ENCODE measurements at regions of chr6 and their contacts with region 1.

Region 1: DNA sequence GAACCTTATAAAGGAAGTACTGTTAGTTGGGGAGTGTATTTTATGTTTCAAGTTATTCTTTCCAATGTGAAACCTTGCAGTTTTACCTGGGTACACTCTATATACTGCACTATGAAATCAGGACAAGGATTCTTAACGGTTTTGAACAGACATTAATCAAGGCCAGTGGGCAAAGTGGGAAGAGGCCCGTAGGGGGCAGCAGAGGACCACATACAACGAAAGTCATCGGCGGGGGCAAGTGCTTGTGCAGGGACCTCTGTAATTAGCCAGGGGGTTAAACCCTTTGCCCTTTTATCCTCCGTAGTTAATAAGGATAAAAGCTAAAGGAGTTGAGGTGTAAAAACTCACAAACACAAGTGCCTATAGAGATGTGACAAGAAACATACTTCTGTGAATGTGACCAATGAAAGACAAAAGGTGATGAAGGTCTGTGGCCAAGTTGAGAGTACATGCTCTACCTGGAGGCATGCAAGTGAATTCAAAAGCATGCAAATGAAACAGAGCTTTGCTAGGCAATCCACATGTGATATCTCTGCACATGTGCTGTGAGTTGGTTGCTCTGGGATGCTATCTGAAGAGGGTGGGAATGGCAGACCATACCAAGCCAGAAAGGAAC is 392.7 kb upstream of the MAN1A1 start:
- DNase-seq: peak; percentile 72
- H3K4me3 Mint-ChIP-seq: no peak overlapping the region
- H3K27ac Mint-ChIP-seq: no peak overlapping the region
- H3K4me1 Mint-ChIP-seq: no peaks in the 10 kb centered on the region
- H3K27me3 Mint-ChIP-seq: no peaks in the 10 kb centered on the region

Region 2: GRCh38 chr6:119978274-119978889 is 236.1 kb after region 1 on chr6:
- CTCF ChIA-PET with region 1: no interaction called
- intact Hi-C with region 1: loop called (anchors 2 kb)
- DNase-seq: peak; percentile 16
- H3K4me3 Mint-ChIP-seq: no peak overlapping the region
- H3K27ac Mint-ChIP-seq: no peak overlapping the region
- H3K4me1 Mint-ChIP-seq: no peaks in the 10 kb centered on the region
- H3K27me3 Mint-ChIP-seq: no peaks in the 10 kb centered on the region

Region 3: DNA sequence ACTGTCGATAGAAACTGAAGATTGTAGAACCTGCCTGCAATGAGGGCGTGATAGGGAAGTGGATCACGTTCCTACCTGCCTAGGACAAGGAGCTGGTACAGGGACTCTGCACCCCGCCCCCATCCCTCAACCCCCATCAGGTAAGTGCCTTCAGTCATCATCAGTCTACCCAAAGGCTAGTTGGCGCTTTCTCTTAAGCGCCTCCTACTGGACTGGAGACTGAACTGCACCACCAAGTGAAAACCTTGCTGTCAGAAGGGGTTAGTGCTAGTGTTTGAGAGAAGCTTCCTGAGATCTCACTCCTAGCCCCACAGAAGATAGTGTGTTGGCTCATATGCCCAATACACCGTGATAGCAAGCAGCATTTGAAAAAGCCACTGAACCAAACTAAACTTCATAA is 313.8 kb after region 1 on chr6:
- CTCF ChIA-PET with region 1: no interaction called
- intact Hi-C with region 1: loop called (anchors 5 kb)
- DNase-seq: peak; percentile 13
- H3K4me3 Mint-ChIP-seq: no peak overlapping the region
- H3K27ac Mint-ChIP-seq: no peak overlapping the region
- H3K4me1 Mint-ChIP-seq: no peaks in the 10 kb centered on the region
- H3K27me3 Mint-ChIP-seq: peaks cover 2% of the 10 kb centered on the region

Region 4: GRCh38 chr6:120378582-120379220 is 636.4 kb after region 1 on chr6:
- CTCF ChIA-PET with region 1: no interaction called
- intact Hi-C with region 1: loop called (anchors 10 kb)
- DNase-seq: no peak
- H3K4me3 Mint-ChIP-seq: no peak overlapping the region
- H3K27ac Mint-ChIP-seq: no peak overlapping the region
- H3K4me1 Mint-ChIP-seq: no peaks in the 10 kb centered on the region
- H3K27me3 Mint-ChIP-seq: no peaks in the 10 kb centered on the region

Region 5: DNA sequence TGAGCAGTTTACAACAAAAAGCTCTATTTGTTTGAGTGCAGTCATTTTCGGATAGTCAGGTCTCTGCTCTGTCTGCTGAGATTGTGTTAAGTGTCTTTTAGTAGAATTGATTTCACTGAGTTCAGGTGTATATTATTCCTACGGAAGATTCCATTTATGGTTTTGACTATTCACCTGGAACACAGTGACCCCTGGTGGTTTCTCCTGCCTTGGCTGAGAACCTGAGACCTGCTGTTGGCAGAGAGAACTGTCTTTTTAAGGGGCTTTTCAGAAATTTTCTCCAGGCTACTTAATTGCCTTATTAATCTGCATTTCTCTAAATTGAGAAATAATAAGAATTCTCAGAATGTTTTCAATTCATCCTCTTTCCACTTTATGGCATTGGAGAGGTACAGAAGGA is 1084.0 kb after region 1 on chr6:
- CTCF ChIA-PET with region 1: no interaction called
- intact Hi-C with region 1: loop called (anchors 2 kb)
- DNase-seq: peak; percentile 24
- H3K4me3 Mint-ChIP-seq: no peak overlapping the region
- H3K27ac Mint-ChIP-seq: no peak overlapping the region
- H3K4me1 Mint-ChIP-seq: no peaks in the 10 kb centered on the region
- H3K27me3 Mint-ChIP-seq: no peaks in the 10 kb centered on the region

Region 6: DNA sequence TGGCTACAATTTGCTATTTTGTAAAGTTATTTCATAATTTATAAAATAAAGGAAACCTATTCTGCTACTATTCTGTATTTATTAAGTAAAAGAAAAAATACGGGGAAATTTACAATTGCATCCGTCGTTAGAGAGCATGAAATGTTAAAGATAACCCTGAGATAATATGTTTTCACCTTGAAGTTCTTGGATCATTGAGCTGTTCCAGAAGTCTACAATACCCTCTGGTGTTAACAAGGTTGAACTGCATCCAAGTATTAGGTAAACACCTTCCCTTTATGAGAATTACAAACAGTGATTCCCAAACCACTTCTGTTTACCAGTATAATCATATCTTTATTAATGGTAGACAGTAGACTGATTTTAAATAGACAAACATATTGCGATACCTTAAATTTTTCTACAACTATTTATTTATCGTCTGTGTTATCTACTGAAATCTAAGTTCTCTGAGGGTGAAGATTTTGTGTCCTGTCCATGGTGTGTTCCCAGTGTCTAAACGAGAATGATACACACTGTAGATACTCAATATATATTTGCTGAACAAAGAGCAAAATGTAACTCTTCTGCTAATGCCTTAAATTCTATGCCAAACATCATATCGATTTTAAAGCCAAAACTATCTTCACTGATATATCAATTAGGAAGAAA is 1563.8 kb after region 1 on chr6:
- CTCF ChIA-PET with region 1: no interaction called
- intact Hi-C with region 1: loop called (anchors 5 kb)
- DNase-seq: no peak
- H3K4me3 Mint-ChIP-seq: no peak overlapping the region
- H3K27ac Mint-ChIP-seq: no peak overlapping the region
- H3K4me1 Mint-ChIP-seq: no peaks in the 10 kb centered on the region
- H3K27me3 Mint-ChIP-seq: no peaks in the 10 kb centered on the region

Measured in activated naive CD4-positive, alpha-beta T cell treated with anti-CD3 and anti-CD28 coated beads for 36 hours (primary cell).